Heart left ventricle (tissue), 16 donors: ENCODE measurements at regions of chr7 and their contacts with region 1.

Region 1: DNA sequence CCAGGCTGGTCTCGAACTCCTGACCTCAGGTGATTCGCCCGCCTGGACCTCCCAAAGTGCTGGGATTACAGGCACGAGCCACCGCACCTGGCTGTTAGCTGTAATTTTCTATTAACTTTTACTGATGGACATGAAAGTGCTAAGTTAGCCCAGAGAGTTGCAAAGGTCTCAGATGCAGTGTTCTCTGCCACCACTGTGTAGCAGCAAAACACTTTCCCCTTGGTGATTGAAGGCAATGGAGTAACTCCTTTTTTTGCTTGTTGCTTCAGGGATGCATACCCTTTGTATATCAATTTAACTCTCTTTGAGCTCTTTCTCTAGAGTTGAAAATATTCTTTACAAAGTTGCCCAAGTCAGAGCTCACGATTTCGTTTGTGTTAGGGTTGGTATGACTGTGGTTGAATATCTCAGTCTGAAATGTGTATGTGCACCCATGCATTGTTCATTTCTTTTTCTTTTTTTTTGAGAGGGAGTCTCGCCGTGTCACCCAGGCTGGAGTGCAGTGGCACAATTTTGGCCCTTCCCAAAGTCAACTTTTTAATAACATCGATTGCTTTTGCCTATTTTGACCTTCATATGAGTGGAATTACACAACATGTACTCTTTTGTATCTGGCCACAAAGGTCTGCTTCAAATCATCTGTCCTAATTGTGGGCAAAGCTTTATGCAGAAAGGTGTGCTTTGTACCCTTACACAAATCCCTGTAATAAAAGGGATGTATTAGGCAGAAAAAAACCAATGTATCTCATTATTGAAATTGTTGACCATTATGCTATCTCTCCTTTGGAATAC is 52.6 kb downstream of the GTF2I start:
- DNase-seq: no peak
- ATAC-seq: no peak
- H3K4me3 ChIP-seq: no peak overlapping the region
- H3K27ac ChIP-seq: no peak overlapping the region
- H3K4me1 ChIP-seq: no peaks in the 10 kb centered on the region
- H3K27me3 ChIP-seq: no peaks in the 10 kb centered on the region
- CTCF ChIP-seq: peak in 1 of 12 donors; percentile 10
- POLR2A ChIP-seq: no peak

Region 2: GRCh38 chr7:74672343-74672915 is 37.6 kb before region 1 on chr7:
- intact Hi-C with region 1: loop called in 1 of 10 experiments (anchors 5 kb)
- DNase-seq: no peak
- ATAC-seq: peak in 1 of 4 donors; percentile 53
- H3K4me3 ChIP-seq: no peak overlapping the region
- H3K27ac ChIP-seq: peak overlapping the region in 6 of 12 donors; percentile 1 to 40 (median 28)
- H3K4me1 ChIP-seq: peaks cover 5 to 42% (median 25%) of the 10 kb centered on the region in 12 donors
- H3K27me3 ChIP-seq: no peaks in the 10 kb centered on the region
- CTCF ChIP-seq: no peak
- POLR2A ChIP-seq: no peak